GM13977 (cell line): ENCODE measurements at regions of chr16 and their contacts with region 1.

Region 1: GRCh38 chr16:10521681-10522274 is 58.6 kb downstream of the EMP2 start:
- DNase-seq: peak; percentile 72
- CTCF ChIP-seq: peak; percentile 65

Region 2: GRCh38 chr16:10918294-10919002 is 396.7 kb after region 1 on chr16:
- in situ Hi-C with region 1: loop called (anchors 10 kb)
- DNase-seq: peak; percentile 80
- CTCF ChIP-seq: peak; percentile 95